ENCODE measurements at regions of chr9 and their contacts with region 1.

Region 1: GRCh38 chr9:129080602-129081387 is at the start of gene DOLPP1:
- DNase-seq: peak; percentile 99
- ATAC-seq: peak; percentile 93 to 99 (median 94)
- H3K4me3 ChIP-seq: peak within 1 kb of the TSS; percentile 80
- H3K4me3 Mint-ChIP-seq: peak within 1 kb of the TSS; percentile 93
- H3K27ac ChIP-seq: peak within 1 kb of the TSS; percentile 66
- H3K27ac Mint-ChIP-seq: peak within 1 kb of the TSS; percentile 82 to 93
- H3K4me1 ChIP-seq: peaks cover 21% of the 10 kb centered on the region
- H3K4me1 Mint-ChIP-seq: peaks cover 9 to 22% of the 10 kb centered on the region in 2 donors
- H3K27me3 ChIP-seq: no peaks in the 10 kb centered on the region
- H3K27me3 Mint-ChIP-seq: no peaks in the 10 kb centered on the region
- CTCF ChIP-seq: no peak
- total RNA-seq, gene DOLPP1: 7.5 to 11.6 (median 7.8) TPM

Region 2: DNA sequence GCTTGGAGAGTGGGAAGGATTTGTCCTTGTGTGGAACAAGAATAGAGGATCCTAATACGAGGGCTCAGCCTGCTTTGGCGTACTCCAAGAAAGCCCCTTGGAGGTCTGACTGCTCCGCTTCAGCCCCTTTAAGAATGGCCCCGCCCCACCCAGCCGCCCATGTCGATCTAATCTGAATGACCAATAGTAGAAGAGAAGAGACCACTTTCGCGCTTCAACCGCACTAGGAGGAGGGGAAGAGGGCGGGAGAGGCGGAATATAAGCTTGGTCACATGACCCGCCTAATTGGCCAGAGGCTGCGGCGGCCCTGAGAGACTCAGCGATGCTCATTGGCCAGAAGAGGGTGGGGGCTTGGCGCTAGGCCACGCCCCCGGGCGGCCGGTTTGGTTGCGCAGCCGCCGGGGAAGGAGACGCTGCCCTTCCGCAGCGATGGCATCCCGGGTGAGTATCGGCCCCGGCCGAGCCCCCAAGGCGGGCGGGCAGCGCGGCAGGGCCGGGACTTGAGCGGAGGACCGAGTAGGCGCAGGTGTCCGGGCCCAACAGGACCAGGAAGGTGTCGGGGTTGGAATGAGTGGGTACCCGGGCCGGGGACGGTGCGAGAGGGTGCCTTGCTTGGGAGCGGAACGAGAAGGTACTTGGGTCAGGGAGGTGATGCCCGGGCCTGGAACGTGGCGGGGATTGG is 44.4 kb before region 1 on chr9 and contains the start of gene MIGA2:
- intact Hi-C with region 1: no loop called
- DNase-seq: peak; percentile 90 to 97
- ATAC-seq: peak; percentile 96 to 100 (median 98)
- H3K4me3 ChIP-seq: peak within 1 kb of the TSS; percentile 99
- H3K4me3 Mint-ChIP-seq: peak within 1 kb of the TSS; percentile 97
- H3K27ac ChIP-seq: peak within 1 kb of the TSS; percentile 62
- H3K27ac Mint-ChIP-seq: peak within 1 kb of the TSS; percentile 73 to 89
- H3K4me1 ChIP-seq: peaks cover 28% of the 10 kb centered on the region
- H3K4me1 Mint-ChIP-seq: peaks cover 24 to 40% of the 10 kb centered on the region in 2 donors
- H3K27me3 ChIP-seq: no peaks in the 10 kb centered on the region
- H3K27me3 Mint-ChIP-seq: no peaks in the 10 kb centered on the region
- CTCF ChIP-seq: no peak
- total RNA-seq, gene MIGA2: 67.3 to 77.9 (median 73.9) TPM

Region 3: GRCh38 chr9:129068990-129069861 is 11.6 kb before region 1 on chr9:
- intact Hi-C with region 1: loop called (anchors 1 kb)
- DNase-seq: peak; percentile 68 to 78
- ATAC-seq: peak; percentile 96 to 98 (median 97)
- H3K4me3 ChIP-seq: no peak overlapping the region
- H3K4me3 Mint-ChIP-seq: peak overlapping the region; percentile 75
- H3K27ac ChIP-seq: peak overlapping the region; percentile 74
- H3K27ac Mint-ChIP-seq: peak overlapping the region; percentile 87 to 94
- H3K4me1 ChIP-seq: peaks cover 45% of the 10 kb centered on the region
- H3K4me1 Mint-ChIP-seq: peaks cover 17 to 25% of the 10 kb centered on the region in 2 donors
- H3K27me3 ChIP-seq: no peaks in the 10 kb centered on the region
- H3K27me3 Mint-ChIP-seq: no peaks in the 10 kb centered on the region
- CTCF ChIP-seq: no peak

Region 4: DNA sequence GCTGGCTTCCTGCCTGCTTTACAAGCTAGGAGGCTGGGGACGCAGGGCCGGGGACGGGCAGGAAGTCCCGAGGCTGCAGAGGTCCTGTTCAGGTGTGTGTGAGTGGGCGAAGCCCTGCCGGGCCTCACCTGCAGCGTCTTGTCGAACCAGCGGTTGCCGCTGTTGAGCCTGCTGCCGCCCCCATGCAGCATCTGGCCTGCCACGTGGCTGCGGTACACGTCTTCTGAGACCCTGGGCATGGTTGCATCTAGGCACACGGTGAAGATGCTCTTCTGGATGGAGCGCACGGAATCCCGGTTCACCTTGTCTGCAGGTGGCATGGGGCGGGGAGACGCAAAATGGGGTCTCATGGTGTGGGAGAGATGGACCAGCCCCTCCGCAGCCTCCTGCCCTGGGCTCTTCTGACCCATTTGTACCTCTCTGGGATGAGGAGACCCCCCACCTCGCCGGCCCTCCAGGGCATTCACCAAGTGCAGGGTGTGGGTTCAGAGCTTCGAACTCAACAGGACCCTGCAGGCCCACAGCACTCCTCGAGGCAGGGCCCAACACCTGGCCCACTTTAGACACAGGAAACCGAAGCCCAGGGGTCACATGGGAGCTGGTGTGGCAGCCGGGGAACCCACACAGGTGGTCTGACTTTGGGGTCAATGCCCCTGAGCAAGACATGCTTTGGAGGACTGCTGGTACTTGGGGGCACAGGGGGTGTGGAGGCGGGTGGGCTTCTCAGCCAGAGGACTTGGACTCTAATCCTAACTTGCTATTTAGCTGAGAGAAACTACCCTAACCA is 19.8 kb after region 1 on chr9:
- intact Hi-C with region 1: no loop called
- DNase-seq: no peak
- ATAC-seq: no peak
- H3K4me3 ChIP-seq: no peak overlapping the region
- H3K4me3 Mint-ChIP-seq: no peak overlapping the region
- H3K27ac ChIP-seq: no peak overlapping the region
- H3K27ac Mint-ChIP-seq: no peak overlapping the region
- H3K4me1 ChIP-seq: no peaks in the 10 kb centered on the region
- H3K4me1 Mint-ChIP-seq: no peaks in the 10 kb centered on the region
- H3K27me3 ChIP-seq: no peaks in the 10 kb centered on the region
- H3K27me3 Mint-ChIP-seq: no peaks in the 10 kb centered on the region
- CTCF ChIP-seq: no peak

Region 5: GRCh38 chr9:129110740-129111527 is 30.1 kb after region 1 on chr9 and contains the starts of genes CRAT and PTPA:
- intact Hi-C with region 1: loop called (anchors 2 kb)
- DNase-seq: peak; percentile 90 to 97
- ATAC-seq: peak; percentile 86 to 96 (median 87)
- H3K4me3 ChIP-seq: peak within 1 kb of the TSS; percentile 68
- H3K4me3 Mint-ChIP-seq: peak within 1 kb of the TSS; percentile 89
- H3K27ac ChIP-seq: peak within 1 kb of the TSS; percentile 88
- H3K27ac Mint-ChIP-seq: peak within 1 kb of the TSS; percentile 88 to 92
- H3K4me1 ChIP-seq: peaks cover 25% of the 10 kb centered on the region
- H3K4me1 Mint-ChIP-seq: peaks cover 23 to 24% of the 10 kb centered on the region in 2 donors
- H3K27me3 ChIP-seq: no peaks in the 10 kb centered on the region
- H3K27me3 Mint-ChIP-seq: no peaks in the 10 kb centered on the region
- CTCF ChIP-seq: no peak
- total RNA-seq, gene CRAT: 13.5 to 13.8 (median 13.8) TPM
- total RNA-seq, gene PTPA: 63.2 to 69.4 (median 64.9) TPM

Measured in natural killer cell (primary cell).